Right ventricle myocardium inferior (tissue), 1 donor: ENCODE measurements at regions of chr7 and their contacts with region 1.

Region 1: GRCh38 chr7:86939197-86939814 is 120.1 kb downstream of the ELAPOR2 start:
- DNase-seq: no peak
- ATAC-seq: peak; percentile 72

Region 2: GRCh38 chr7:87234949-87235348 is 295.6 kb after region 1 on chr7:
- intact Hi-C with region 1: loop called (anchors 5 kb)
- DNase-seq: no peak
- ATAC-seq: no peak